Endothelial cell of umbilical vein (primary cell): ENCODE measurements at regions of chr5 and their contacts with region 1.

Region 1: DNA sequence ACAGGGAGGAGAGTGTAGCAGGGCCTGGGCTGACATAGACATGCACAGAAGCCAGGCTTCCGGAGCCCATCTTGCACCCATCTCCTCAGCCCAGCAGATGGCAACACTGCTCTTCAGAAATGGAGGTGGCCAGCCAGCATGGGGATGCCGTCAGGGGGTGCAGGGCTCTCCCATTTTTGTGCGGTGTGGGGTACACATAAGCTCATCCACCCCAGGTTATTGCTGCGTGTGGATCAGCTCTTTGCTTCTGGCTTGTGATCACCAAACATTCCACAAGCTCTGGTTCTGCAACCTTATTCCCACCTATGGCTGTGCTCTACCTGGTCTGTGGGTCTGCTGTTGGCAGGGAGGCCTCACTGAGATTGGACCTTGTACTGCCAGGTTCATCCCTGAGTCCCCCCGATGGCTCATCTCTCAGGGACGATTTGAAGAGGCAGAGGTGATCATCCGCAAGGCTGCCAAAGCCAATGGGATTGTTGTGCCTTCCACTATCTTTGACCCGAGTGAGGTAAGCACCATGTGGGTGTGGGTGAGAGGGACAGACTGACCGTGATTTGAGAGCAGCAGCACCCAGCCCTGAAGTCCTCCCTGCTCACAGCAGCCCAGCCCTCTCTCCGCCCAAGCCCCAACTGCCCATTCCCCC is 17.3 kb downstream of the SLC22A5 start:
- DNase-seq: peak; percentile 77
- H3K4me3 ChIP-seq: no peak overlapping the region
- H3K27ac ChIP-seq: peak overlapping the region; percentile 99
- H3K4me1 ChIP-seq: peaks cover 48% of the 10 kb centered on the region
- H3K27me3 ChIP-seq: no peaks in the 10 kb centered on the region
- CTCF ChIP-seq: peak; percentile 80 to 90
- POLR2A ChIP-seq: no peak

Region 2: DNA sequence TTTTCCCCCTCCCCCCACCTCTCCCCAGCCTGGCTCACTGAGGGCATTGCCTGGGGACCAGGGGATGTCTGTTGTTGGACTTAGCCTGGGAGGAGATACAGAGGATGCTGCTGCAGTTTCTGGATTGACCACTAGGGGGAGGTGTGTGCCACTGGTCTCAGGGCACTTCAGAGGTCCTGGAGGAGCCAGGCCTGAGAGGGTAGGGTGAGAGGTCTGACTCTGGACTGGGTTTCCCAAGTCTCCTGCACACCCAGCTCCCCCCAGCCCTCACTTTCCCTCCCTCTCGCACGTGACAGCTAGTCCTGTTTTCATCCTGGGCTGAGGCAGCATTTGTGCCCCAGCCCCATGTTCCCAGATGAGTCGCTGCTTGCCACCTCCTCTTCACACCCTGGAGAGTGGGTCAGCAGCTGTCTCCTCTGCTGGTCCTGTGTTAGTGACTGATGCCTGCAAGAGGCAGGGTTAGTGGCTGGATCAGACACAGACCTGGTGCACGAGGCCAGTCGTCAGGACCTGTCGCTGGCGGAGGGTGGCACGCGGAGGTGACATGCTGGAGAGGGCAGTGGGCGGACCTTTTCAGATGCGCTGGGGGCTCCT is 321.9 kb before region 1 on chr5:
- CTCF ChIA-PET with region 1: no interaction called
- POLR2A ChIA-PET with region 1: no interaction called
- dilution Hi-C with region 1: no loop called
- intact Hi-C with region 1: loop called (anchors 2 kb)
- DNase-seq: peak; percentile 78
- H3K4me3 ChIP-seq: no peak overlapping the region
- H3K27ac ChIP-seq: no peak overlapping the region
- H3K4me1 ChIP-seq: no peaks in the 10 kb centered on the region
- H3K27me3 ChIP-seq: no peaks in the 10 kb centered on the region
- CTCF ChIP-seq: peak; percentile 93 to 97
- POLR2A ChIP-seq: no peak

Region 3: DNA sequence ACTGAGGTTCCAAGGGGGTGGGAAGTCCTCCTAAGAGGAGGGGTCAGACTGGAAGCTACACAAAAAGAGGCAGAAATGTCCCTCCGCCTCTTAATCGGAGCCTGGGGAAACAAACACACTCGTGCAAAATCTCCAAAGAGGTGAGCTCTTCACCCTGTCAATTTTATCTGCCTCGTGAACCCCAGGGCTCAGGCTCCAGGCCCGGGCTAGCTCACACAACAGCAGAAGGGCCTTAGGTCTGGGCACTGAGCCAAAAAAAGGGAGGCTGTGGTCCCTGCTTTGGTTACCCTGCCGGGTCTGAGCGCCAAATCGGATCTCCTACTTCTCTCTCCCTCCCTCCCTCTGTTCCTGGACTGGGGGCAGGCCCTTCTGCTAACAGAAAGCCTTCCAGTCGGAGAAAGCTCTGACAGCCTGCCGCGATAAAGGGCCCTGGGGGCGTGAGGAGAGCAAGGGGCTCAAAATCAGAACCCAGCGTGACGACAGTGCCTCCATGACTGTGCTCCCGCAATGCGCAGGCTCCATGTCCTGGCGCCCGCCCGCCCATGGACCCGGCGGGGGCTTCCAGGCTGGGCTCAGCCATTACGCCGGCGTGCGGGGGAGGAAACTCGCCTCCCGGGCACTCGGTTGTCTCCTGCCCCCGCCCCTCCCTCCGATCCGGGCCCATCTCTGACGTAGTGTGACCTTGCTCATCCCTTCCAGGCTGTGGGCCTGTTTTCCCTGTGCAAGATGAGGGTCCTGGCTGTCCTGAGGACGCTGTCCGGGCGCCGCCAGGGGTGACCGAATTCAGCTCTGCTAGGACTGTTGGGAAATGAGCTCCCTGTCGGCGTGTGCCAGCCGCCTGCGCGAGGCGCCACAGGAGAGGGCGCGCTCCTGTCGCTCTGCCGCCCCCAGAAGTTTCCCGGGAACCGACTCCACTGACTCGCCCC is 93.4 kb before region 1 on chr5:
- CTCF ChIA-PET with region 1: interaction called, 11 read pairs
- POLR2A ChIA-PET with region 1: no interaction called
- dilution Hi-C with region 1: no loop called
- intact Hi-C with region 1: loop called (anchors 1 kb)
- DNase-seq: peak; percentile 89
- H3K4me3 ChIP-seq: peak overlapping the region; percentile 37 to 70 (median 53)
- H3K27ac ChIP-seq: peak overlapping the region; percentile 93
- H3K4me1 ChIP-seq: peaks cover 25% of the 10 kb centered on the region
- H3K27me3 ChIP-seq: no peaks in the 10 kb centered on the region
- CTCF ChIP-seq: peak in 1 of 2 donors; percentile 40
- POLR2A ChIP-seq: no peak

Region 4: DNA sequence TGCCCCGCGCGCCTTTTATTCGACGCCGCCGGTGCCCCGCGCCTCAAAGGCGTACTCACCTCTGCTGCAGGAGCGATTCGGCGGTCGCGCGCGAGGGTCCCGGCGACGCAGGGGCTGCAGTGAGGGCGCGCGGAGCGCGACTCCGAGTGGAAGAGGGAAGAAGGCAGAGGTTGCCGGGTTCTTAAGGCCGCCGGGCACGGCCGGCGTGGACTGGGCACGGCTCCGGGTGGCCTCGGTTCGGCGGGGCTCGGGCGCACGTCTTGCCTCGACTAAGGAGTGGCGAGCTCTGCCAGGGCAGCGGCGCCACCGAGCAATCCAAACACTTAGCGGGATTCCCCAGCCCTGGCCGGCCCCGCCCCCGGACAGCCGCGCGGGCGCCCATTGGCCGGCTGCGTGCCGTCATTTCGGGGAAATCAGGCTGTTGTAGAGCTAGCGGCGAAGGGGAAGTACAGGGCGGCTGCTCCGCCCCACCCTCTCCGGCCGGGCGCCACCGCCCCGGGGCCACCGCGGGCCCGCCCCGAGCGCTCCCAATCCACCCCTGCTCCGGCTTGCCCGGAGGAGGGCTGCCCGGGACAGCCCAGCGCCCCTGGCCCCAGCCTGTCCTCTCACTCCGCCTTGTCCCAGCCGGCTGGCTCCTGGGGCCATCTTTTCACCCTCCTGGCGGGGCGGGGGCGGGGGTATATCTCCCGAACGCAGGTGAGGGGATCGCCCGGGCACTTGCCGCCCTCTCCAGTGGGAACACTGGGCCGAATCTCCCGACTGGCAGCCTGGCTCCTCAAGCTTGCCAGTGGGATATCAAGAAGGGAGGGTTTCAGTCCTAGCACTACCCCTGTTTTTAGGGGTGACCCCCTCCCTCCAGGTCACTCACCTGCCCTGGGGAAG is 104.0 kb after region 1 on chr5 and contains the start of gene IRF1:
- CTCF ChIA-PET with region 1: interaction called, 220 read pairs
- POLR2A ChIA-PET with region 1: interaction called, 14 read pairs
- dilution Hi-C with region 1: no loop called
- intact Hi-C with region 1: no loop called
- DNase-seq: peak; percentile 97
- H3K4me3 ChIP-seq: peak within 1 kb of the TSS; percentile 52 to 90 (median 66)
- H3K27ac ChIP-seq: peak within 1 kb of the TSS; percentile 89
- H3K4me1 ChIP-seq: peaks cover 25% of the 10 kb centered on the region
- H3K27me3 ChIP-seq: no peaks in the 10 kb centered on the region
- CTCF ChIP-seq: peak in 1 of 2 donors; percentile 26
- POLR2A ChIP-seq: peak; percentile 94
- total RNA-seq, gene IRF1: 17.7 and 28.0 TPM in 2 replicates

Region 5: GRCh38 chr5:132526290-132526973 is 139.7 kb after region 1 on chr5:
- CTCF ChIA-PET with region 1: interaction called, 18 read pairs
- POLR2A ChIA-PET with region 1: no interaction called
- dilution Hi-C with region 1: no loop called
- intact Hi-C with region 1: no loop called
- DNase-seq: peak; percentile 75
- H3K4me3 ChIP-seq: no peak overlapping the region
- H3K27ac ChIP-seq: no peak overlapping the region
- H3K4me1 ChIP-seq: no peaks in the 10 kb centered on the region
- H3K27me3 ChIP-seq: peaks cover under 1 to 3% of the 10 kb centered on the region in 2 experiments
- CTCF ChIP-seq: peak; percentile 76 to 83
- POLR2A ChIP-seq: no peak

Region 6: DNA sequence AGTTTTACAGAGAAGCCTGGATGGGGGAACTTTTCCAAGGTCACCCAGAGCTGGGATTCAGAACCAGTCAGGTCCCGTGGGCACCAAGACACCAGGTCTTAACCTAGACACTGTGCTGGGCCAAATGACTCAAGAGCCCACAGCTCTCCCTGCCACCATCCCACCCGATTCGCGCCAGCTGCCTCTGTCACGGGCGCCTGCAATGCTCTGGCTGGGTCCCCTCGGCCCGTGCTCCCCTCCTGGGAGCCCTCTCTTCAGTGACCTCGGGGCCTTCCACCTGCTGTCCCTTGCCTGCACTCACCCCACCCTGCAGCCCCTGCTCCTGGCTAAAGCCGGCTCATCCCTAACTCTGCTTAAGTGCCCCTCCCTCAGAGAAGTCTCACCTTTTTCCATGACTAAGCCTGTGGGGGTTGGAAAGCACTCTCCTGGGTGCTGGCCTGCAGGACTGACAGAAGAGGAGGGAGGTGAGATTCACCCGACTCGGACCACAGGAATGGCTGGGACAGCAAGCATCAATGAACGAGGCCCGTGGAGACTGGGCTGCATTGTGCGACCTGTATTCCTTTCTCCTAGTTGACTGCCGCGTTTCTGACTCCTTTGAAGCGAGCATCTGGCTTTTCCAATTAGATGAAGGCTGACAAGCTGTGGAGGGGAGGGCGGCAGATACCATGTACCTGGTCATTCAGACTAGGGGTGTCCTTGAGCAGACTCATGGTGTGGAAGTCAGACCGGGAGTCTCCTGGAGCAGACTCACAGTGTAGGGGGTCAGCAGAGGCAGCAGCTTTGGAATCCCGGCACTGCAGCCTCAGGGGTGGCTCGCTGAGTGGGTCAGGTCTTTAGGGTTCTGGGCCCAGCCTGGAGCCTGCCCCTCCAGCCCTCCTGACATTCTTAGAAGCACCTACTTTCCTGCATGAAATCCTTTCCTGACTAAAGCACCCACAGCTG is 281.3 kb after region 1 on chr5:
- CTCF ChIA-PET with region 1: no interaction called
- POLR2A ChIA-PET with region 1: no interaction called
- dilution Hi-C with region 1: no loop called
- intact Hi-C with region 1: no loop called
- DNase-seq: no peak
- H3K4me3 ChIP-seq: no peak overlapping the region
- H3K27ac ChIP-seq: no peak overlapping the region
- H3K4me1 ChIP-seq: no peaks in the 10 kb centered on the region
- H3K27me3 ChIP-seq: peaks cover 0 to 2% of the 10 kb centered on the region in 2 experiments
- CTCF ChIP-seq: no peak
- POLR2A ChIP-seq: no peak

Region 7: GRCh38 chr5:132714456-132715307 is 327.9 kb after region 1 on chr5:
- CTCF ChIA-PET with region 1: interaction called, 3 read pairs
- POLR2A ChIA-PET with region 1: no interaction called
- dilution Hi-C with region 1: no loop called
- intact Hi-C with region 1: loop called (anchors 2 kb)
- DNase-seq: peak; percentile 28
- H3K4me3 ChIP-seq: no peak overlapping the region
- H3K27ac ChIP-seq: no peak overlapping the region
- H3K4me1 ChIP-seq: no peaks in the 10 kb centered on the region
- H3K27me3 ChIP-seq: no peaks in the 10 kb centered on the region
- CTCF ChIP-seq: peak; percentile 12 to 18
- POLR2A ChIP-seq: no peak

Region 8: GRCh38 chr5:132988124-132988408 is 601.3 kb after region 1 on chr5:
- CTCF ChIA-PET with region 1: no interaction called
- POLR2A ChIA-PET with region 1: no interaction called
- dilution Hi-C with region 1: no loop called
- intact Hi-C with region 1: no loop called
- DNase-seq: no peak
- H3K4me3 ChIP-seq: no peak overlapping the region
- H3K27ac ChIP-seq: no peak overlapping the region
- H3K4me1 ChIP-seq: no peaks in the 10 kb centered on the region
- H3K27me3 ChIP-seq: peaks cover 0 to 2% of the 10 kb centered on the region in 2 experiments
- CTCF ChIP-seq: no peak
- POLR2A ChIP-seq: no peak

Region 9: GRCh38 chr5:133051580-133052332 is 665.0 kb after region 1 on chr5 and contains the start of gene HSPA4:
- CTCF ChIA-PET with region 1: no interaction called
- POLR2A ChIA-PET with region 1: no interaction called
- dilution Hi-C with region 1: no loop called
- intact Hi-C with region 1: loop called (anchors 10 kb)
- DNase-seq: peak; percentile 99
- H3K4me3 ChIP-seq: peak within 1 kb of the TSS; percentile 61 to 90 (median 61)
- H3K27ac ChIP-seq: peak within 1 kb of the TSS; percentile 86
- H3K4me1 ChIP-seq: peaks cover 37% of the 10 kb centered on the region
- H3K27me3 ChIP-seq: no peaks in the 10 kb centered on the region
- CTCF ChIP-seq: no peak
- POLR2A ChIP-seq: peak; percentile 98
- total RNA-seq, gene HSPA4: 157 and 161 TPM in 2 replicates